Activated CD4-positive, alpha-beta T cell treated with anti-CD3 and anti-CD28 coated beads for 36 hours (primary cell): ENCODE measurements at regions of chr16 and their contacts with region 1.

Region 1: DNA sequence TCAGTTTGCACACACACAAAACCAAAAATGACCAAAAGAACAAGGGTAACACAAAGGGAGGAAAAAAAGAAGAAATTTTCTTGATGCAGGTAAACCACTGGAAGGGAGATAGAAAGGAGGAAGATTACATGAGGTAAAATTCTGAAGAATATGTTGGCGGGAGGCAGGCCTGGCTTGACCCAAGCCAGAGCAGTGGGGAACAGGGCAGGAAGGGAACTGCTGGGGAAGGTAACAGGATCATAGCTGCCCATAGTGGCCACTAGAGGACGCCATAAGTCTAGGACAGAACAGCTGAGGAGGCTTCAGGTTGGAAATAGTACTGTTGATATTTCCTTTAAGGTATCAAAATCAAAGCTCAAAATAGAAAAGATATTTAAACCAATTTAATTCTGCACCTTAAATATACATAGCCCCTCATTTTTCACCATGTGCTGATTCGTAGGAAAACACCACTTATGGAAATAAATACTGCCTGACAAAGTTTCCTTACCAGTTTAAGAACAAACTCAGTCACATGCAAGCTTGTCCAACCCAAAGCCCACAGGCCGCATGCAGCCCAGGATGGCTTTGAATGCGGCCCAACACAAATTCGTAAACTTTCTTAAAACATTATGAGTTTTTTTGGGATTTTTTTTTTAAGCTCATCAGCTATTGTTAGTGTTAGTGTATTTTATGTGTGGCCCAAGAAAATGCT is 15.5 kb downstream of the VPS35 start:
- DNase-seq: peak; percentile 67
- ATAC-seq: peak; percentile 95
- H3K4me3 Mint-ChIP-seq: no peak overlapping the region
- H3K27ac Mint-ChIP-seq: no peak overlapping the region
- H3K4me1 Mint-ChIP-seq: no peaks in the 10 kb centered on the region
- H3K27me3 Mint-ChIP-seq: no peaks in the 10 kb centered on the region

Region 2: DNA sequence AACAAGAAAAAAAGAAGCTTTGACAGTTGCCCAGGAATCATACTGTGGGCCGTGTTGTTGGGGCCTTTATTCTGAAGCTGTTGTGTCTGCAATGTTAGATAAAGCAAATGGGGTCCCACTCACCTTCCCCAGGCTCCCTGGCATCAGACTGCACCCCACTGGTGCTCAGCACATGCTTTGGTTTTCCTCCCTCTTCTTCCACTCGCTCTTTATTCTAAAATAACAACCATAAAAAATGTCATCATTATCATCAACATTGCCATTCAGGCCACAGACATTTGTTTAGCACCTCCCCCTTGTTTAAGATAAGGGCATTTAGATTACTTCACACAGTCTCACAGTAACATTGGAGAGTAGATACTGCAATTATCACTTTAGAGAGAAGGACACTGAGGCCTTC is 66.5 kb after region 1 on chr16:
- CTCF ChIA-PET with region 1: interaction called, 11 read pairs
- POLR2A ChIA-PET with region 1: no interaction called
- intact Hi-C with region 1: no loop called
- DNase-seq: no peak
- ATAC-seq: no peak
- H3K4me3 Mint-ChIP-seq: no peak overlapping the region
- H3K27ac Mint-ChIP-seq: no peak overlapping the region
- H3K4me1 Mint-ChIP-seq: peaks cover 5% of the 10 kb centered on the region
- H3K27me3 Mint-ChIP-seq: no peaks in the 10 kb centered on the region

Region 3: GRCh38 chr16:46822270-46822669 is 148.8 kb after region 1 on chr16:
- CTCF ChIA-PET with region 1: no interaction called
- POLR2A ChIA-PET with region 1: no interaction called
- intact Hi-C with region 1: loop called in 1 of 2 experiments (anchors 5 kb)
- DNase-seq: peak; percentile 68
- ATAC-seq: peak; percentile 95
- H3K4me3 Mint-ChIP-seq: no peak overlapping the region
- H3K27ac Mint-ChIP-seq: no peak overlapping the region
- H3K4me1 Mint-ChIP-seq: peaks cover 37% of the 10 kb centered on the region
- H3K27me3 Mint-ChIP-seq: no peaks in the 10 kb centered on the region

Region 4: GRCh38 chr16:46908540-46909372 is 235.3 kb after region 1 on chr16:
- CTCF ChIA-PET with region 1: interaction called, 28 read pairs
- POLR2A ChIA-PET with region 1: no interaction called
- intact Hi-C with region 1: loop called (anchors 1 kb)
- DNase-seq: peak; percentile 77
- ATAC-seq: peak; percentile 36
- H3K4me3 Mint-ChIP-seq: no peak overlapping the region
- H3K27ac Mint-ChIP-seq: no peak overlapping the region
- H3K4me1 Mint-ChIP-seq: peaks cover 5% of the 10 kb centered on the region
- H3K27me3 Mint-ChIP-seq: no peaks in the 10 kb centered on the region

Region 5: GRCh38 chr16:47247690-47248089 is 574.2 kb after region 1 on chr16:
- CTCF ChIA-PET with region 1: no interaction called
- POLR2A ChIA-PET with region 1: no interaction called
- intact Hi-C with region 1: no loop called
- DNase-seq: no peak
- ATAC-seq: no peak
- H3K4me3 Mint-ChIP-seq: no peak overlapping the region
- H3K27ac Mint-ChIP-seq: no peak overlapping the region
- H3K4me1 Mint-ChIP-seq: no peaks in the 10 kb centered on the region
- H3K27me3 Mint-ChIP-seq: no peaks in the 10 kb centered on the region